Aorta (tissue), 5 donors: ENCODE measurements at regions of chr20 and their contacts with region 1.

Region 1: GRCh38 chr20:58571693-58572427 is 56.7 kb upstream of the APCDD1L start:
- DNase-seq: peak in 1 of 2 donors; percentile 63
- ATAC-seq: no peak
- H3K4me3 ChIP-seq: no peak overlapping the region
- H3K27ac ChIP-seq: peak overlapping the region; percentile 40 to 72
- H3K4me1 ChIP-seq: no peaks in the 10 kb centered on the region
- H3K27me3 ChIP-seq: no peaks in the 10 kb centered on the region

Region 2: DNA sequence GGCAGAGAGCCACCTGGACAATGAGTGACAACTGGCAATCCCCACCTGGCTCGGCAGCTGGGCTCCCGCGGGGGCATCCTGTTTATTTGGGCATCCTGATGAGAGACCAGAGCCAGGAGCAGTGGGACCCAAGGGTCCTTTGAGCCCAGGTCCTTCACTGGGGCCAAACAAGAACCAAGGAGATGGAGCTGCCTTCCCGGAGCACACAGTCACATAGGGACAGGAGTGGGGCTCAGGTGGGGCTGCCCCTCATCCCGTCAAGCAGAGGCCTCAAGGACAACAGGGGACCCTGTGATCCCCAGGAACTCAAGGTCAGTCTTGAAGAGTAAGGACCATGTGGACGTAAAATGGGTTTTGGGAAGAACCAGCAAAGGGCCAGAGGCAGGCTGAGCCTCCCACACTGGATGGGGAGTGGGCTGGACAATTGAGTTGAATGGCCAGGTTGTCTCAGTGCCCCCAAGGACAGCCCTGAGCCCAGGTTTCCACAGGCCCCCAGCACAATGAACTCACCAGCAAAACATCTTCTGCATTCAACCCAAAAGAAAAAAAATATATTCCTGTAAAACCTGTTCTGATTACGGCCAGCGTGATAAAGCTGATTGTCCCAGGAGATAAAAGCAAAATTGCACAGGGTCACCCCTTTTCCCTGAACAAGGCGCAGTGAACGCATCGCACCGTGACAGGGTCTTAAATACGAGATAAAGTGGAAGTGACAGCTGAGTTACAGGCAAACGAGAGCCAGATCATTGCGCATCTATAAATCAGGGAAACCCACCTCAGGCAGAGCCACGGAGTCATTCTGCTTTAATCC is 429.7 kb before region 1 on chr20:
- intact Hi-C with region 1: no loop called
- DNase-seq: peak in 1 of 2 donors; percentile 44
- ATAC-seq: no peak
- H3K4me3 ChIP-seq: no peak overlapping the region
- H3K27ac ChIP-seq: no peak overlapping the region
- H3K4me1 ChIP-seq: peaks cover 3 to 8% of the 10 kb centered on the region in 2 donors
- H3K27me3 ChIP-seq: no peaks in the 10 kb centered on the region

Region 3: GRCh38 chr20:58515233-58516184 is 56.4 kb before region 1 on chr20 and contains the start of gene APCDD1L:
- intact Hi-C with region 1: loop called in 1 of 2 experiments (anchors 5 kb)
- DNase-seq: peak; percentile 68 to 84
- ATAC-seq: peak; percentile 61
- H3K4me3 ChIP-seq: peak within 1 kb of the TSS; percentile 5 to 56
- H3K27ac ChIP-seq: no peak within 1 kb of the TSS
- H3K4me1 ChIP-seq: no peaks in the 10 kb centered on the region
- H3K27me3 ChIP-seq: no peaks in the 10 kb centered on the region
- total RNA-seq, gene APCDD1L: 1.7 to 14.6 TPM

Region 4: GRCh38 chr20:58612121-58612691 is 40.3 kb after region 1 on chr20:
- intact Hi-C with region 1: loop called in 1 of 2 experiments (anchors 2 kb)
- DNase-seq: peak in 1 of 2 donors; percentile 53
- ATAC-seq: no peak
- H3K4me3 ChIP-seq: no peak overlapping the region
- H3K27ac ChIP-seq: peak overlapping the region; percentile 6 to 78
- H3K4me1 ChIP-seq: no peaks in the 10 kb centered on the region
- H3K27me3 ChIP-seq: no peaks in the 10 kb centered on the region